Posterior vena cava (tissue), 2 donors: ENCODE measurements at regions of chr9 and their contacts with region 1.

Region 1: GRCh38 chr9:22446950-22447617 is 460 bp downstream of the DMRTA1 start:
- DNase-seq: peak; percentile 80

Region 2: GRCh38 chr9:22469928-22470544 is 23.0 kb after region 1 on chr9:
- intact Hi-C with region 1: loop called in 1 of 2 experiments (anchors 1 kb)
- DNase-seq: no peak